ENCODE measurements at regions of chr14 and their contacts with region 1.

Region 1: DNA sequence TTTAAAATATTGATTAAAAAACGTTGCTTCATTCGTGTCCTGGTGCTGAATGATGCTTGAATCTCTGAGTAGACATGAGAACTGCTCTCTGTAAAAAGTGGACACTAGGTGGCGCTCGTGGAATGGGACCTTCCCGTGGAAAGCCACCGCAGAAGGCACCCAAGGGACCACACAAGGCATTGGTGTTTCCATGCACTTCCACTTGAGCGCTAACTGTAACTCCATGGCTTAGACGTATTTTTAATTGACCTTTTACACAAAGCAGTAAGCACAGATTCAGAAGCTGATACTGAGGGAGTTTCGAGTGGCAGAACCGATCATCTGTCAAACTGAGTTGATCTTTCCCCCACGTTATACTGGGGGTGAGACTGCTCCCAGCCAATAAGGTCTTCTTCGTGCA is 135.3 kb downstream of the PRKCH start:
- DNase-seq: peak; percentile 94
- H3K4me3 Mint-ChIP-seq: no peak overlapping the region
- H3K27ac Mint-ChIP-seq: peak overlapping the region; percentile 39
- H3K4me1 Mint-ChIP-seq: peaks cover 74% of the 10 kb centered on the region
- H3K27me3 Mint-ChIP-seq: no peaks in the 10 kb centered on the region

Region 2: GRCh38 chr14:61321385-61322010 is 135.2 kb before region 1 on chr14 and contains the start of gene PRKCH:
- intact Hi-C with region 1: loop called (anchors 10 kb)
- DNase-seq: peak; percentile 96
- H3K4me3 Mint-ChIP-seq: peak within 1 kb of the TSS; percentile 93
- H3K27ac Mint-ChIP-seq: peak within 1 kb of the TSS; percentile 91
- H3K4me1 Mint-ChIP-seq: peaks cover 21% of the 10 kb centered on the region
- H3K27me3 Mint-ChIP-seq: no peaks in the 10 kb centered on the region
- total RNA-seq, gene PRKCH: 108 and 118 TPM in 2 replicates

Region 3: DNA sequence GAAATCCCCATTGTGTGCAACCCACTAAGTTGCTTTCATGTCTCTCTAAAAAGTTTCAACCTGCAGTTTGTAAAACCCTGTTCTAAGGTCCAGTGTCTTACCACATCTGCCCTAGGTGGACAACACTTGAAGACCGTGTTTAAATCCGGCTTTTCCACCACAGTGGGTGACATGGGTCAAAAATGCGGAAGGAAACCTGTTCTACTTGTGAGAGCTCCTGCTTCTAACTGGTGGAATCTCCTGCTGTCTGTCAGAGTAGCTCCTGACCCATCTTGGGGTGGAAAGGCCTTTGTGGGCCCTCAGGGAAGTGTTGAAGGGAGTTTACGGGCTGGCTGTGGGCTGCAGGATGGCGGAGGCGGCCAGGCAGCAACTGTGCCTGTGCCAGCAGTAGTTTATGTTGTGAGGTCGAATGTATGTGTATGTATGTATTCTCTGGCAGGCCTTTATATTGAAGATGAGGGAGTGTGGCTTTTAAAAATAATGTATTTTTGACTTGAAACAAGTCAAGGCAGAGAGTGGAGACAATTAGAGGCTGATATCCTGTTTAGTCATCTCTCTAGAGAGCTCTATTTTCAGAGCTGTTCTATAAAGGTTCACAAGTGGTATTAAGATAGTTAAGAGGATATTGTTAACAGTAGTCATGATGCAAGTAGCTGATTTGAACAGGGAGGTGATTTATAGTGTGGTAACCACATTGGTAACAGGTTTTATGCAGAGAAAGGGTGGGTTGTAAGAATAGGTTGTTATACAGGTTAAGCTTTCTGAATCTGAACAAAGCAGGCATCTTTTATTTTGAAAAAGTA is 68.3 kb before region 1 on chr14:
- intact Hi-C with region 1: loop called (anchors 2 kb)
- DNase-seq: peak; percentile 78
- H3K4me3 Mint-ChIP-seq: no peak overlapping the region
- H3K27ac Mint-ChIP-seq: no peak overlapping the region
- H3K4me1 Mint-ChIP-seq: peaks cover 28% of the 10 kb centered on the region
- H3K27me3 Mint-ChIP-seq: no peaks in the 10 kb centered on the region

Region 4: DNA sequence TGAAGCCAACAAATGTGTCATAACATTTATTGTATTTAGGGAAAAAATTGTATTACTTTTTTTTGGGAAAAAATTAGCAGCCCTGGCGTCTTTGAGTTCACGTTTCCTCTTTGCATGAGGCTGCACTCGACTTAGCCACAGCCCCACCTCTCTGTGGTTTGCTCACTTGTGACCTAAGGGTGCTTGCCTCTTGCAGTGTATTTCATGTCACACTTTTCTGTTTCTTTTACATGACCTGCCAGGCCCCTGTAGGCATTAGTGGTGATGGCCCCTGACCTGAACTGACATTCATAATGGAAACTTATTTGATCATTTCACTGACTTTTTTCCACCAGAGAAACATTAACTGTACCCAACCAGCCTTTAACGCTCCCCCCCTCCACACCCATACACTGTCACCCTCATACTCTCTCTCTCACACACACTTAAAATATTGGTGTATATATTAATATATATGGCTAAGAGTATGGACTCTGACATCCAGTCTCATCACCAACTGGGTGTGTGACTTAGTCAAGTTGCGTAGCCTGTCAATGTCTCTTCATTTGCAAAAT is 12.4 kb before region 1 on chr14:
- intact Hi-C with region 1: loop called (anchors 1 kb)
- DNase-seq: peak; percentile 91
- H3K4me3 Mint-ChIP-seq: peak overlapping the region; percentile 70
- H3K27ac Mint-ChIP-seq: peak overlapping the region; percentile 87
- H3K4me1 Mint-ChIP-seq: peaks cover 83% of the 10 kb centered on the region
- H3K27me3 Mint-ChIP-seq: no peaks in the 10 kb centered on the region

Region 5: DNA sequence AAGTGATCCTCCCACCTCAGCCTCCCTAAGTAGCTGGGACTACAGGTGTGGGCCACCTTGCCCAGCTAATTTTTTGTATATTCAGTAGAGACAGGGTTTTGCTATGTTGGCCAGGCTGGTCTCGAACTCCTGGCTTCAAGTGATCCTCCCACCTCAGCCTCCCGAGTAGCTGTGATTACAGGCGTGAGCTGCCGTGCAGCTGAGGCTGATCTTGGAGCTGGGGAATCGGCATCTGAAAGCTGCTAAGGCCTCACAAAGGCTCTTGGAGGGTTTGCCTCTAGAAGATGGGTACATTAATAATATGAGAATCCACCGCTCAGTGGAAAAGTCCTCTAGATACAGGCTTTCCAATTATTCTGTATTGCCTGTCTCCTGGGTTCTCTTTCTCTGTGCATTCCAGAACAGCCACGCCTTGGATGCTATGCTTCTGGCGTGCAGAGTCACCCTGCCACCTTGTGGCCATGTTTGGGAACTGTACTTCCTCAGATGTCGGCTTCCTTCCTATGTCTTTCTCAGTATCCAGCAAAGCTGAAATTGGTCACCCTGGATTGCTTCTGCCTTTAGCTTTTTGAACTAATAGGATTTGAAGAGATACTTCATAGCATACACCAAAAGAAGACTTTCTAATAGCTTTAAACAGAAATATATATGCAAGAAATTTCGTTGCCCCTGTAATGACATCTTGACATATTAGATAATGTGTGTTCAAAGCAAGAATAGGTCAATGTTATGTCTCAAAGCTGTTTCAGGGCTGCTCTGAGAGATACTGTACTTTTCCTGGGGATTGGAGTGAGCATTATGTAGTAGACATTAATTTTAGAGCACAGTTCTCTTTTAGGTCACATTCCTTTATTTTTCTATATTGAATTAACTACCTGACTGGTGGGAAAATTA is 380.9 kb after region 1 on chr14:
- intact Hi-C with region 1: loop called (anchors 1 kb)
- DNase-seq: peak; percentile 93
- H3K4me3 Mint-ChIP-seq: no peak overlapping the region
- H3K27ac Mint-ChIP-seq: no peak overlapping the region
- H3K4me1 Mint-ChIP-seq: peaks cover 13% of the 10 kb centered on the region
- H3K27me3 Mint-ChIP-seq: peaks cover 21% of the 10 kb centered on the region

Region 6: GRCh38 chr14:62162998-62163589 is 706.4 kb after region 1 on chr14:
- intact Hi-C with region 1: no loop called
- DNase-seq: peak; percentile 66
- H3K4me3 Mint-ChIP-seq: no peak overlapping the region
- H3K27ac Mint-ChIP-seq: no peak overlapping the region
- H3K4me1 Mint-ChIP-seq: no peaks in the 10 kb centered on the region
- H3K27me3 Mint-ChIP-seq: peaks cover 9% of the 10 kb centered on the region

Measured in activated CD4-positive, alpha-beta T cell treated with anti-CD3 and anti-CD28 coated beads, Interleukin-2, amount 10 ng/mL, durations not matched to agents 24 days and 14 days (primary cell).